ENCODE measurements at regions of chr14 and their contacts with region 1.

Region 1: DNA sequence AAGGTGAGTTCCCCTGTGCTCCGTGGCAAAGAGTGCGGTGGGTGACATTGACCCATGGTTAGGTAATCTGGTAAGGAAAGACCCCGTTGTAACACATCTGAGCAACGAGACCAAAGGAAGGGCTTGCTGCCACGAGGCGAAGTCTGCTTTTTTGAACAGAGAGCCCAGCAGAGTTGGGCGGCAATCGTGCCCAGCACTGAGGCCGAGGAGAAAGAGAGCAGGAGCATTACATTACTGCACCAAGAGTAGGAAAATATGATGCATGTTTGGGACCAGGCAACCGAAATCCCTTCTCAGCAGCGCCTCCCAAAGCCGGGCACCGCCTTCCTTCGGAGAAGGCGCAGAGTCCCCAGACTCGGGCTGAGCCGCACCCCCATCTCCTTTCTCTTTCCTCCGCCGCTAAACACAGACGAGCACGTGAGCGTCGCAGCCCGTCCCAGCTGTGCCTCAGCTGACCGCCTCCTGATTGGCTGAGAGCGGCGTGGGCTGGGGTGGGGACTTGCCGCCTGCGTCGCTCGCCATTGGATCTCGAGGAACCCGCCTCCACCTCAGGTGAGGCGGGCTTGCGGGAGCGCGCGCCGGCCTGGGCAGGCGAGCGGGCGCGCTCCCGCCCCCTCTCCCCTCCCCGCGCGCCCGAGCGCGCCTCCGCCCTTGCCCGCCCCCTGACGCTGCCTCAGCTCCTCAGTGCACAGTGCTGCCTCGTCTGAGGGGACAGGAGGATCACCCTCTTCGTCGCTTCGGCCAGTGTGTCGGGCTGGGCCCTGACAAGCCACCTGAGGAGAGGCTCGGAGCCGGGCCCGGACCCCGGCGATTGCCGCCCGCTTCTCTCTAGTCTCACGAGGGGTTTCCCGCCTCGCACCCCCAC is at the start of gene HIF1A:
- DNase-seq: peak; percentile 99
- H3K4me3 Mint-ChIP-seq: peak within 1 kb of the TSS; percentile 88
- H3K27ac Mint-ChIP-seq: peak within 1 kb of the TSS; percentile 99
- H3K4me1 Mint-ChIP-seq: peaks cover 46% of the 10 kb centered on the region
- H3K27me3 Mint-ChIP-seq: peaks cover 3% of the 10 kb centered on the region
- total RNA-seq, gene HIF1A: 175 and 181 TPM in 2 replicates

Region 2: GRCh38 chr14:61153431-61153830 is 541.6 kb before region 1 on chr14:
- intact Hi-C with region 1: no loop called
- DNase-seq: no peak
- H3K4me3 Mint-ChIP-seq: no peak overlapping the region
- H3K27ac Mint-ChIP-seq: no peak overlapping the region
- H3K4me1 Mint-ChIP-seq: no peaks in the 10 kb centered on the region
- H3K27me3 Mint-ChIP-seq: peaks cover 2% of the 10 kb centered on the region

Region 3: DNA sequence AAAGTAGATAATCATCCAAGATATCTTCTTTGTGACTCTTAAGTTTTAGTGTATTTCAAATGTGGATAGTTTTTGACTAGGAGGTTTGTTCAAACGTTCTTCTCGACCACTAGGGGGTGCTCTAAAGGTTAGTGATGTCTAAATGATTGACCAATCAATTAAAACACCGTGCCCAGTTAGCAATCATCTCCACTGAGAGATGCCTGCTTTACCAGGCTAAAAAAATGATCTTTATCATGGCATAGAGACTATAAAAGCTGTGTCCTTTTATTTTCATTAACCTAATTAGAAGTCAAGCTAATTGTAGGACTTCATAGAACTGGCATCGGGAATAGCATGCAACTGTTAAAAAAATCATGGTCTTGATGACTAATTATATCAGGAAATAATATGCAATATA is 219.7 kb before region 1 on chr14:
- intact Hi-C with region 1: loop called (anchors 1 kb)
- DNase-seq: peak; percentile 79
- H3K4me3 Mint-ChIP-seq: peak overlapping the region; percentile 39
- H3K27ac Mint-ChIP-seq: peak overlapping the region; percentile 87
- H3K4me1 Mint-ChIP-seq: peaks cover 85% of the 10 kb centered on the region
- H3K27me3 Mint-ChIP-seq: no peaks in the 10 kb centered on the region

Region 4: DNA sequence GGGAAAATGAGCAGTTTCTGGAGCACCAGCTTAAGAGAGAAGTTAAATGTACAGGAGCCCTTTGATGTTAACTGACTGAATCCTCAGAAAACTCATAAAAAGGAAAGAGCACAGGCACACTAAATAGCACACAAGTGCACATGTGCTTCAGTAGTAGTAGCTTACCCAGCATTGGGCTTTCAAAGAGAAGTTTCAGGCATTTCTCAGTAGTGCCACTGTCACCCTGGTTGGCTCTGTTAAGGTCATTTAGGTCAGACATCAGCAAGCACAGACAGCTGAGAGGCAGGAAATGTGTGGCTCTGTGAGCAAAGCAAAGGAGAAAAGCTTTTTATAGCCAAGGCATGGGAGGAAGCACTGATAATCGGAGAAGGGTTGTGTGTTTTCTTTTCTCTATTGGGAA is 96.1 kb before region 1 on chr14:
- intact Hi-C with region 1: loop called (anchors 1 kb)
- DNase-seq: peak; percentile 81
- H3K4me3 Mint-ChIP-seq: peak overlapping the region; percentile 31
- H3K27ac Mint-ChIP-seq: peak overlapping the region; percentile 79
- H3K4me1 Mint-ChIP-seq: peaks cover 40% of the 10 kb centered on the region
- H3K27me3 Mint-ChIP-seq: no peaks in the 10 kb centered on the region

Region 5: DNA sequence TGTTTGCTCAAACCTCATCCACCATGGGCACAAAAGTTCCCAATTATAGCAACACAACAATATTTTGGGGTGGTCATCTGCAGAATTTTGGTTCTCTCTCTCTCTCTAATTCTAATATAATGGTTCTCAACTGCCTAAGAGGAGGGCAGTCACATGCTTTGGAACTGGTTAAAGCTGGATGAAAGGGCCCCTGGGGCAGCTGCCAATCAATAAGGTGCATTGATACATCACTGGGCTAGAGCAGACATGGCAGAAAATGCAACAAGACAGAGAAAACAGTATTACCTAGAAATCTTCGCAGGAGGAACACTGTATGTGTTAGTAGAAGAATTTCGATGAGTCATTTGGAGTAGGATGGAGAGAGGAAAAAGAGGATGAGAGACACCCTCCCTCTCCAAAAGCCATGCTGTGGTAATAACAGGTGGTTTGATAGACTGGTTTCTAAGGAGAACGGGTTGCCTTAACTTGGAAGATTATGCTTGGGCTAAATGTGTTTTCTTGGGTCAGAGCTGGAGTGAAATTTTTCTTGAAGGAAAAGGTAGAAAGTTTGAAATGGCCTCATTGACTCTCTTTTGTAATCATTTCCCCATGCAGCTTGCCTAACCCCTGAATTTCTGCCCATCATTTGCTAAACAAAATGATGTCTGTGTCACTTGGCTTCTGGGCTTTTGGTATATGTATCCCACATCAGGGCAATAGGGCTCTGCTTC is 66.9 kb before region 1 on chr14:
- intact Hi-C with region 1: no loop called
- DNase-seq: no peak
- H3K4me3 Mint-ChIP-seq: no peak overlapping the region
- H3K27ac Mint-ChIP-seq: no peak overlapping the region
- H3K4me1 Mint-ChIP-seq: peaks cover 10% of the 10 kb centered on the region
- H3K27me3 Mint-ChIP-seq: no peaks in the 10 kb centered on the region

Region 6: GRCh38 chr14:61662437-61663311 is 32.4 kb before region 1 on chr14:
- intact Hi-C with region 1: loop called (anchors 1 kb)
- DNase-seq: peak; percentile 90
- H3K4me3 Mint-ChIP-seq: peak overlapping the region; percentile 70
- H3K27ac Mint-ChIP-seq: peak overlapping the region; percentile 95
- H3K4me1 Mint-ChIP-seq: peaks cover 66% of the 10 kb centered on the region
- H3K27me3 Mint-ChIP-seq: no peaks in the 10 kb centered on the region

Region 7: GRCh38 chr14:61710853-61711817 is 16.1 kb after region 1 on chr14:
- intact Hi-C with region 1: loop called (anchors 2 kb)
- DNase-seq: no peak
- H3K4me3 Mint-ChIP-seq: peak overlapping the region; percentile 53
- H3K27ac Mint-ChIP-seq: peak overlapping the region; percentile 68
- H3K4me1 Mint-ChIP-seq: peaks cover 62% of the 10 kb centered on the region
- H3K27me3 Mint-ChIP-seq: no peaks in the 10 kb centered on the region

Region 8: DNA sequence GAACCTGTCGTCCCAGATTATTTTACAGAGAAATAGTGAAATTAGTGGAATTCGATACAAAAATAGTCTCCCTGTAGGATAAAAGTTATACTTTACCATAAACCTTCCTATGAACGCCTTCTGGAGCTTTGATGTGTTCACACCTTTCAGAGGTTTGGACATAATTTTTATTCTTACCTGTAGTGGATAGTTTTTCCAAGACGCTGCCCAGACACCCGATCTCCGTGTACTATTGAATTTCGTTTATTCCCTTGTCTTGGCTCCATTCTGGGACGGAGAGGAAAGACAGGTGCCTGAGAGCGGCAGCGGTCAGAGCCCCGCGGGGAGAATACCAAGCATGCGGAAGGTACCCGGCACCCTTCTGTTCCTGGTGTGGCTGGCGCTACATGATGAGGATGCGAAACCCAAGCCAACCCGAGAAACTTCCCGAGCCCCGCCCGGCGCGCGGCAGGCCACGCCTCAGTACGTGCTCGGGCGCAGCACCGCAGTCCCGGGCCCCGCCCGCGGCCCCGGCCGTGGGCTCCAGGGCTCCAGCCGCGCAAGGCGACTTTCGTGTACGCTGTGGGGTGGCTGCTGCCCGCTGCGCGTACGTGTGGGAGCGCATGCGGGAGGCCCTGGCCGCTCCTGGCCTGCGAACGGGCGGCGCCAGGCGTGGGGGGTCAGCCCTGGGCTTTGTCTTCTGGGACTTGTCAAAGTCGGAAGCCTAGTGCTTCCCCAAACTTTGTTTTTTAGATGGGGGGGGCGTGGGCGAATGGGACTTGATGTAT is 55.8 kb after region 1 on chr14:
- intact Hi-C with region 1: loop called (anchors 2 kb)
- DNase-seq: peak; percentile 97
- H3K4me3 Mint-ChIP-seq: peak overlapping the region; percentile 98
- H3K27ac Mint-ChIP-seq: peak overlapping the region; percentile 94
- H3K4me1 Mint-ChIP-seq: peaks cover 49% of the 10 kb centered on the region
- H3K27me3 Mint-ChIP-seq: no peaks in the 10 kb centered on the region

Measured in activated CD4-positive, alpha-beta T cell treated with anti-CD3 and anti-CD28 coated beads, Interleukin-2, amount 10 ng/mL, durations not matched to agents 24 days and 14 days (primary cell).